ENCODE measurements at regions of chr3 and their contacts with region 1.

Region 1: GRCh38 chr3:59506191-59506590 is 456.4 kb upstream of the CFAP20DC start:
- DNase-seq: no peak

Region 2: GRCh38 chr3:59341459-59341858 is 164.7 kb before region 1 on chr3:
- intact Hi-C with region 1: no loop called
- DNase-seq: no peak

Region 3: GRCh38 chr3:59469948-59470723 is 36.1 kb before region 1 on chr3:
- intact Hi-C with region 1: loop called in 1 of 2 experiments (anchors 1 kb)
- DNase-seq: no peak